Heart left ventricle (tissue), 16 donors: ENCODE measurements at regions of chr7 and their contacts with region 1.

Region 1: GRCh38 chr7:30564243-30564892 is 30.3 kb upstream of the GARS1 start:
- DNase-seq: peak; percentile 76 to 83 (median 79)
- ATAC-seq: peak; percentile 81 to 94 (median 94)
- H3K4me3 ChIP-seq: no peak overlapping the region
- H3K27ac ChIP-seq: no peak overlapping the region
- H3K4me1 ChIP-seq: peaks cover 0 to 23% (median 1%) of the 10 kb centered on the region in 12 donors
- H3K27me3 ChIP-seq: no peaks in the 10 kb centered on the region
- CTCF ChIP-seq: peak; percentile 74 to 90 (median 86)
- POLR2A ChIP-seq: no peak

Region 2: GRCh38 chr7:30276203-30276900 is 288.0 kb before region 1 on chr7:
- intact Hi-C with region 1: loop called (anchors 2 to 5 kb)
- DNase-seq: peak in 2 of 5 donors; percentile 30 to 34
- ATAC-seq: peak in 3 of 4 donors; percentile 60 to 86 (median 79)
- H3K4me3 ChIP-seq: no peak overlapping the region
- H3K27ac ChIP-seq: no peak overlapping the region
- H3K4me1 ChIP-seq: peaks cover 0 to 19% (median 0%) of the 10 kb centered on the region in 12 donors
- H3K27me3 ChIP-seq: no peaks in the 10 kb centered on the region
- CTCF ChIP-seq: peak; percentile 35 to 78 (median 64)
- POLR2A ChIP-seq: no peak

Region 3: GRCh38 chr7:30412810-30413504 is 151.4 kb before region 1 on chr7:
- intact Hi-C with region 1: loop called in 1 of 10 experiments (anchors 5 kb)
- DNase-seq: peak in 1 of 5 donors; percentile 30
- ATAC-seq: peak; percentile 82 to 95 (median 92)
- H3K4me3 ChIP-seq: no peak overlapping the region
- H3K27ac ChIP-seq: no peak overlapping the region
- H3K4me1 ChIP-seq: peaks cover 0 to 14% (median 0%) of the 10 kb centered on the region in 12 donors
- H3K27me3 ChIP-seq: no peaks in the 10 kb centered on the region
- CTCF ChIP-seq: peak; percentile 26 to 77 (median 64)
- POLR2A ChIP-seq: no peak

Region 4: DNA sequence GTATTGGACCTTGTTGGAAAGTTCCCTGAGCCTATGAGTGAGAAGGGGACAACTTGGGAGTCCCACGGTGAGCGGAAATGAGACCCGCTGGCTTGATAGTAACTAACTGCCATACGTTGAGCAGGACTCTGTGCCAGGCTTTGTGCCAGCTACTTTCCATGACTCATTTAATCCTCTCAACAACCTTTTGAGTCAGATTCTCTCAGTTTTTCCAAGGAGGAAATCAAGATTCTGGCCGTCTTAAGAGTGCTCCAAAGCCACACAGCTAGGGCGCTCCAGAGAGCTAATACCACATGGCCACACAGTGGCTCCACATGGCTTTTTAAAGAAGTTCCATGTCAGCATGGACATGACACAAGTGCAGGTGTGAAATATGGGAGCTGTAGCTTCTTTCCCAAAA is 141.4 kb before region 1 on chr7:
- intact Hi-C with region 1: loop called in 1 of 10 experiments (anchors 10 kb)
- DNase-seq: no peak
- ATAC-seq: peak in 1 of 4 donors; percentile 30
- H3K4me3 ChIP-seq: no peak overlapping the region
- H3K27ac ChIP-seq: no peak overlapping the region
- H3K4me1 ChIP-seq: peaks cover 0 to 21% (median 0%) of the 10 kb centered on the region in 12 donors
- H3K27me3 ChIP-seq: no peaks in the 10 kb centered on the region
- CTCF ChIP-seq: no peak
- POLR2A ChIP-seq: no peak

Region 5: DNA sequence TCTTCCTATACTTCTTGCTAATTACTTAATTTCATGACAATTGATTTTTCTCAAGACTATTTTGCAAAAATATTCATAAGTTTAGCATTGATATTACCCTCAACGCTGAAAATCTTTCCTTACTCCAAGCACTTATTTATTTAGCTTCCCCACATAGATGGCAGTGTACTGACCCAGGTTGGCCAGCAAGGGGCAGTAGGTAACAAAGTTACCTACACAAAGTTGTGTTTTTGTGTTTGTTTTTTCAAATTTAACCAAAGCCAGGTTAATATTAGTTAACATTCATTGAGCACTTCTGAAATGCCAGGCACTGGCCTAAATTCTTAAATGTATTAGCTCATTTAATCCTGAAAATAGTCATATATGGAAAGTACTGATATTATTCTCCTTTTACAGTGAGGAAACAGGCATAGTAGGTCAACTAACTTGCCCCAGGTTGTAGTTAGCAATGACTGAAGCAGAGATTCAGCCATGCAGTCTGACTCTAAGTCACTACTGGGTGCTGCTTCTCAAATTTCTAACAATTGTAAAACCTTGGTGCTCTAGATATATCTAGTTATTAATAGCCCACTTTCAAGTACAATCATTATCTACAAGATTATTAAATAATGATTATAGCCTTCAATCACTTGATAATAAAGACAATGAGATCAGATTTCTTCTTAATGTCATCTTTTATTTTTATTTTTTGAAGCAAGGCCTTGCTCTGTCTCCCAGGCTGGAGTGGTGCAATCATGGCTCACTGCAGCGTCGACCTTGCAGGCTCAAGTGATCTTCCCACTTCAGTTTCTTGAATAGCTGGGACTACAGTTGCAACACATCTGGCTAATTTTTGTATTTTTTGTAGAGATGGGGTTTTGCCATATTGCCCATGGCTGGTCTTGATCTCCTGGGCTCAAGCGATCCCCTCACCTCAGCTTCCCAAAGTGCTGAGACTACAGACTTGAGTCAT is 54.0 kb before region 1 on chr7:
- intact Hi-C with region 1: loop called in 8 of 10 experiments (anchors 1 to 10 kb)
- DNase-seq: no peak
- ATAC-seq: peak in 2 of 4 donors; percentile 52 to 65
- H3K4me3 ChIP-seq: no peak overlapping the region
- H3K27ac ChIP-seq: no peak overlapping the region
- H3K4me1 ChIP-seq: peaks cover 0 to 12% (median under 1%) of the 10 kb centered on the region in 12 donors
- H3K27me3 ChIP-seq: no peaks in the 10 kb centered on the region
- CTCF ChIP-seq: peak; percentile 53 to 86 (median 74)
- POLR2A ChIP-seq: no peak

Region 6: GRCh38 chr7:30526170-30526569 is 38.2 kb before region 1 on chr7:
- intact Hi-C with region 1: no loop called
- DNase-seq: no peak
- ATAC-seq: no peak
- H3K4me3 ChIP-seq: no peak overlapping the region
- H3K27ac ChIP-seq: no peak overlapping the region
- H3K4me1 ChIP-seq: peaks cover 0 to 11% (median 0%) of the 10 kb centered on the region in 12 donors
- H3K27me3 ChIP-seq: no peaks in the 10 kb centered on the region
- CTCF ChIP-seq: no peak
- POLR2A ChIP-seq: no peak

Region 7: DNA sequence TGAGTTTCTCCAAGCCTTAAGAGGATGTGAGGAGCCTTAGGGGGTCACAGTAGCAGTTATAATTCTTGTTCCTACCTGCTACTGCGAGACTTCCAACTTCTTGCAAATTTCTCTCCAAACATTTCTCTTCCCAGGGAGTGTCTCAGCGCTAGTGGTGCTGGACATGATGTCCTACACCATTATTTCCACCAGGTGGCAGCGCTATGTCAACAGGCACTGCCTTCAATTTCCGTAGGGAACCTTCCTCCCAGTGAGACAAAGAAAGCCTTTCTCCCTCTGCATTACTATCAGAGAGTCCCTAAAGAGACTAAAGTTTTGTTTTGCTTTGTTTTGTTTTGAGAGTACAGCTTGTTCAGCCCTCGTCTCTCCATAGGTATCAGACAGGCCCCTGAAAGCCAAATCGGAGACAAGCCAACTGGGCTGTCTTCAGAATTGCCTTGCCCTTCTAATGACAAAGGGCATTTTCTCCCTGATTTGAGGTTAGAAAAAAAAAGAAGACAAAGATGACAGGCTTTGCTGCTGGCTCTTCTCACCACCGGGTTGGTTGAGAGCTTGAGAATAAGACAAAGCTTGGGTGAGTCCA is 15.5 kb before region 1 on chr7:
- intact Hi-C with region 1: loop called in 3 of 10 experiments (anchors 1 kb)
- DNase-seq: peak in 4 of 5 donors; percentile 48 to 70 (median 60)
- ATAC-seq: peak; percentile 66 to 84 (median 76)
- H3K4me3 ChIP-seq: no peak overlapping the region
- H3K27ac ChIP-seq: peak overlapping the region in 11 of 12 donors; percentile 20 to 77 (median 56)
- H3K4me1 ChIP-seq: peaks cover 3 to 31% (median 14%) of the 10 kb centered on the region in 12 donors
- H3K27me3 ChIP-seq: no peaks in the 10 kb centered on the region
- CTCF ChIP-seq: peak; percentile 72 to 95 (median 83)
- POLR2A ChIP-seq: no peak